Ovary (tissue), 10 donors: ENCODE measurements at regions of chr18 and their contacts with region 1.

Region 1: GRCh38 chr18:24315170-24315569 is 82.5 kb downstream of the OSBPL1A start:
- DNase-seq: no peak
- H3K4me3 ChIP-seq: no peak overlapping the region
- H3K27ac ChIP-seq: no peak overlapping the region
- H3K4me1 ChIP-seq: peaks cover 3% of the 10 kb centered on the region
- H3K27me3 ChIP-seq: no peaks in the 10 kb centered on the region
- CTCF ChIP-seq: no peak
- EP300 ChIP-seq: no peak
- POLR2A ChIP-seq: no peak

Region 2: GRCh38 chr18:24341361-24341760 is 26.2 kb after region 1 on chr18:
- intact Hi-C with region 1: loop called in 1 of 4 experiments (anchors 1 kb)
- DNase-seq: no peak
- H3K4me3 ChIP-seq: no peak overlapping the region
- H3K27ac ChIP-seq: no peak overlapping the region
- H3K4me1 ChIP-seq: no peaks in the 10 kb centered on the region
- H3K27me3 ChIP-seq: no peaks in the 10 kb centered on the region
- CTCF ChIP-seq: no peak
- EP300 ChIP-seq: no peak
- POLR2A ChIP-seq: no peak

Region 3: DNA sequence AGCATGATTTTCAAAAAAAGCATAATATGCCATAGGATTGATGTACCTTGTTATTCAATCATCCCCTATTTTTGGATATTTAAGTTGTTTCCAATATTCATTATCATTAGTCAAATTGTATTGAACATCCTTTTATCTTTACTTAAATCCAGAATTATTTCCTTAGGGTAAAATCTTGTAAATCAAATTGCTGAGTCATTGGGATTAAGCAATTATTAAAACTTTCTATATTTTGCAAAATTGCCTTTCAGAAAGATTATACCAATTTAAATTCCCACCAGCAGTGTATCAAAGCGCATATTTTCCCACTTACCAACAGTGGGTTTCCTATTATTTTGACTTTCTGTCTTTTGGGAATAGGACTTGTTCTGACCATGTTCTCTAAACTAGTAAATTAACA is 1616.0 kb after region 1 on chr18:
- intact Hi-C with region 1: no loop called
- DNase-seq: no peak
- H3K4me3 ChIP-seq: no peak overlapping the region
- H3K27ac ChIP-seq: no peak overlapping the region
- H3K4me1 ChIP-seq: no peaks in the 10 kb centered on the region
- H3K27me3 ChIP-seq: no peaks in the 10 kb centered on the region
- CTCF ChIP-seq: no peak
- EP300 ChIP-seq: no peak
- POLR2A ChIP-seq: no peak